ENCODE measurements at regions of chr17 and their contacts with region 1.

Region 1: GRCh38 chr17:979538-980405 is at the start of gene NXN:
- DNase-seq: peak; percentile 61 to 92 (median 83)
- ATAC-seq: peak; percentile 81 to 92 (median 84)
- H3K4me3 ChIP-seq: peak within 1 kb of the TSS; percentile 56 to 63
- H3K4me3 Mint-ChIP-seq: peak within 1 kb of the TSS; percentile 74 to 82 (median 75)
- H3K27ac ChIP-seq: no peak within 1 kb of the TSS
- H3K27ac Mint-ChIP-seq: peak within 1 kb of the TSS; percentile 36 to 88
- H3K4me1 ChIP-seq: peaks cover 0 to 25% of the 10 kb centered on the region in 2 experiments
- H3K4me1 Mint-ChIP-seq: peaks cover 19 to 21% (median 20%) of the 10 kb centered on the region in 3 donors
- H3K27me3 ChIP-seq: peaks cover 7 to 35% of the 10 kb centered on the region in 2 experiments
- H3K27me3 Mint-ChIP-seq: peaks cover 31 to 35% of the 10 kb centered on the region in 2 donors
- total RNA-seq, gene NXN: 0.56 to 1.3 (median 0.96) TPM

Region 2: GRCh38 chr17:693791-694638 is 285.8 kb before region 1 on chr17:
- CTCF ChIA-PET with region 1: no interaction called
- POLR2A ChIA-PET with region 1: no interaction called
- DNase-seq: no peak
- ATAC-seq: no peak
- H3K4me3 ChIP-seq: no peak overlapping the region
- H3K4me3 Mint-ChIP-seq: no peak overlapping the region
- H3K27ac ChIP-seq: no peak overlapping the region
- H3K27ac Mint-ChIP-seq: no peak overlapping the region
- H3K4me1 ChIP-seq: no peaks in the 10 kb centered on the region
- H3K4me1 Mint-ChIP-seq: no peaks in the 10 kb centered on the region
- H3K27me3 ChIP-seq: no peaks in the 10 kb centered on the region
- H3K27me3 Mint-ChIP-seq: no peaks in the 10 kb centered on the region

Region 3: GRCh38 chr17:781805-782731 is 197.7 kb before region 1 on chr17 and contains the starts of genes GLOD4 and MRM3:
- CTCF ChIA-PET with region 1: interaction called in 1 of 2 experiments, 10 read pairs
- POLR2A ChIA-PET with region 1: no interaction called
- DNase-seq: peak; percentile 85 to 97 (median 93)
- ATAC-seq: peak; percentile 94 to 96 (median 96)
- H3K4me3 ChIP-seq: peak within 1 kb of the TSS; percentile 92 to 100
- H3K4me3 Mint-ChIP-seq: peak within 1 kb of the TSS; percentile 95 to 99 (median 96)
- H3K27ac ChIP-seq: peak within 1 kb of the TSS; percentile 84
- H3K27ac Mint-ChIP-seq: peak within 1 kb of the TSS; percentile 94 to 95
- H3K4me1 ChIP-seq: peaks cover 15 to 31% of the 10 kb centered on the region in 2 experiments
- H3K4me1 Mint-ChIP-seq: peaks cover 31 to 37% (median 35%) of the 10 kb centered on the region in 3 donors
- H3K27me3 ChIP-seq: no peaks in the 10 kb centered on the region
- H3K27me3 Mint-ChIP-seq: no peaks in the 10 kb centered on the region
- total RNA-seq, gene GLOD4: 66.9 to 85.1 (median 76.8) TPM
- total RNA-seq, gene MRM3: 23.0 to 34.1 (median 25.6) TPM

Region 4: DNA sequence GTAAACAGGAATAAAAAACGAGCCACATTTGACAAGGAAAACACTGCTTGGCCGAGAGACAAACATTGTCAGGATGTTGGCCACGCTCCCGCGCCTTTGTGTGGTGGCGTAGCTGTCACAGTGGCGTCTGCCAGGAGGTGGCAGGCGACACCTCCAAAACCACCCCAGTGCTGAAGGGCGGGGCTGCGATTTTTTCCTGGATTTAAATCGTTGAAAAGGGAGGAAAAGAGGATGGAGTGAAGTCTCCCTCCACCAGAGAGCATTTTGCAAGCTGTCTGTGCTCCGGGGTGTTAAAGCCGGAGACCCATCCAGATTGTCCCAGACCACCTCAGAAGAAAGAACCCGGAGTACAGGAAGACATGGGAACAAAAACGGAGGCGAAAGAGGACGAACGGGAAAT is 184.9 kb before region 1 on chr17:
- CTCF ChIA-PET with region 1: interaction called in 1 of 2 experiments, 19 read pairs
- POLR2A ChIA-PET with region 1: no interaction called
- DNase-seq: peak in 27 of 35 experiments; percentile 8 to 63 (median 31)
- ATAC-seq: peak; percentile 61 to 83 (median 72)
- H3K4me3 ChIP-seq: no peak overlapping the region
- H3K4me3 Mint-ChIP-seq: no peak overlapping the region
- H3K27ac ChIP-seq: no peak overlapping the region
- H3K27ac Mint-ChIP-seq: no peak overlapping the region
- H3K4me1 ChIP-seq: peaks cover 0 to 7% of the 10 kb centered on the region in 2 experiments
- H3K4me1 Mint-ChIP-seq: peaks cover 6 to 10% (median 6%) of the 10 kb centered on the region in 3 donors
- H3K27me3 ChIP-seq: no peaks in the 10 kb centered on the region
- H3K27me3 Mint-ChIP-seq: no peaks in the 10 kb centered on the region

Region 5: DNA sequence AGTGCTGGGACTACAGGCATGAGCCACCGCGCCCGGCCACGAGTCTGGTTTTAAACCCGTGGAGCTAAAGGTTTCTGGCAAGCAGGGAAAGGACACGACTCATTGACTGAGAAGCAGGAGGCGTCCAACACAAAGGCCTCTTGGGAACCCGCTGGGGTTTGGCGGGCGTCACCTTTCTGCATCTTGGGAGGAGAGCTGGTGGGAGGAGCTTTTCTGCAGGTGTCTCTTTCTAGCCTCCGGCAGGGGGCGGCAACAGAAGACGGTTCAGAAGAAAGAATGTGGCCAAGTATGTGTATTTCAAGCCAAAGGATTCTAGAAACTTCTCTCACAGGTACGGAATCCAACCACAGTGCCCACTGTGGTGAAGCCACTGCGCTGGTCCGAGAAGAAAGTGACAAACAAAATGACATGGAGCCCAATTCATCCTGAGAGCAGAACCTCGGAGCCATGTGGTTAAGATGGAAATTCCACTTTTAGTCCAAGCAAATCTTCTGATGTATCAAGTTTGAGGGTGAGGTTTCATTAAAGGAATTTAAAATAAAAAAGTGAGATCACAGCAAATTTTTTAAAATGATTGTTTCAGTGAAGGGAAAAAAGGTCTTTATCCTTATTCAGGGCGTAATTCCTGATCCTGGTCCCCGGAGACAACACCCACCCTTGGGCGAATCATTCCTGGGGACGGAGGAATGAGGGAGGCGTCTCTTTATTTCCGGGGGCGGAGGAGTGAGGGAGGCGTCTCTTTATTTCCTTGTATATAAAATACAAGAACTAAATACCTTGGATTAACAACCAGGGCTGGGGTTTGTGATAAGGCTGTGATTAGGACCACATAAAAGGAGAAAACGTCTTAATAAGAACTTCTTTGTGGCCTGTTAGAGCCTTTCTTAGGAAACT is 100.0 kb before region 1 on chr17:
- CTCF ChIA-PET with region 1: interaction called in 1 of 2 experiments, 21 read pairs
- POLR2A ChIA-PET with region 1: no interaction called
- DNase-seq: peak; percentile 13 to 81 (median 64)
- ATAC-seq: peak; percentile 37 to 79 (median 59)
- H3K4me3 ChIP-seq: no peak overlapping the region
- H3K4me3 Mint-ChIP-seq: no peak overlapping the region
- H3K27ac ChIP-seq: no peak overlapping the region
- H3K27ac Mint-ChIP-seq: no peak overlapping the region
- H3K4me1 ChIP-seq: peaks cover 0 to 12% of the 10 kb centered on the region in 2 experiments
- H3K4me1 Mint-ChIP-seq: peaks cover 9 to 13% (median 10%) of the 10 kb centered on the region in 3 donors
- H3K27me3 ChIP-seq: peaks cover 0 to 43% of the 10 kb centered on the region in 2 experiments
- H3K27me3 Mint-ChIP-seq: peaks cover 21 to 29% of the 10 kb centered on the region in 2 donors

Region 6: DNA sequence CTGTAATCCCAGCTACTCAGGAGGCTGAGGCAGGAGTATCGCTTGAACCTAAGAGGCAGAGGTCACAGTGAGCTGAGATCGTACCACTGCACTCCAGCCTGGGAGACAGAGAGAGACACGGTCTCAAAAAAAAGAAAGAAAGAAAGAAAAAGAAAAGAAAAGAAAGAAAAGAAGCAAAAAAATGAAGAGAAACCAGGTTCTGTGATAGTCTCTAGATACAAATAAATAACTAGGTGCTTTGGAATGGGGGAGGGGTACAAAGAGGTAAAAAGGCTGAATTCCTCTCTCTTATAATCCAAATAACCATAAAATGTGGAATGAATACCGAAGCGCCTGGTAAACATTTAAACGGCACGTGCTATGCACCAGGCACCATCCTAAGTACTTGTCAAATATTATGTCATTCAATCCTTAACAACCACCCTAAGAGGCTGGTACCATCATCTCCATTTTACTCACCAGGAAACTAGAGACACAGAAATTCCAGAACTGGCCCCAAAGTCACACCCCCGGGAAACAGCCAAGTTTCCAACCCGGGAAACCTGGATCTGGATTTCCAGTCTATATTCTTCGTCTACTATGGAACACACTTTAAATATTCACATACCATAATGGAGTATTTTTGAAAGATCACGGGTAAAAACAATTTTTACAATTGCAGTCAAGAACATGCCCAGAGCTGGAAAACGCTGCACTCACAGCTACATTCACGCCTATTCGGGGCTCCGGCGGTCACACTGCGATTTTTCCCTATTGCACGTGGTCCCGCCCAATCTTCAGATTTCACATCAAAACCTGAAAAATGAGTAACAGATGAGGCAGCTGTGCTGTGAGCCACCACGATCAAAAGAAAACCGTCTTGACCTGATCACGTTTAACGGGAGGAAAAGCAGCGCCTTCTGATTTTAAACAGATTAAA is 10.7 kb before region 1 on chr17:
- CTCF ChIA-PET with region 1: no interaction called
- POLR2A ChIA-PET with region 1: no interaction called
- DNase-seq: no peak
- ATAC-seq: no peak
- H3K4me3 ChIP-seq: no peak overlapping the region
- H3K4me3 Mint-ChIP-seq: no peak overlapping the region
- H3K27ac ChIP-seq: no peak overlapping the region
- H3K27ac Mint-ChIP-seq: no peak overlapping the region
- H3K4me1 ChIP-seq: no peaks in the 10 kb centered on the region
- H3K4me1 Mint-ChIP-seq: peaks cover 3 to 5% (median 5%) of the 10 kb centered on the region in 3 donors
- H3K27me3 ChIP-seq: peaks cover 2 to 61% of the 10 kb centered on the region in 2 experiments
- H3K27me3 Mint-ChIP-seq: peaks cover 44 to 59% of the 10 kb centered on the region in 2 donors

Region 7: DNA sequence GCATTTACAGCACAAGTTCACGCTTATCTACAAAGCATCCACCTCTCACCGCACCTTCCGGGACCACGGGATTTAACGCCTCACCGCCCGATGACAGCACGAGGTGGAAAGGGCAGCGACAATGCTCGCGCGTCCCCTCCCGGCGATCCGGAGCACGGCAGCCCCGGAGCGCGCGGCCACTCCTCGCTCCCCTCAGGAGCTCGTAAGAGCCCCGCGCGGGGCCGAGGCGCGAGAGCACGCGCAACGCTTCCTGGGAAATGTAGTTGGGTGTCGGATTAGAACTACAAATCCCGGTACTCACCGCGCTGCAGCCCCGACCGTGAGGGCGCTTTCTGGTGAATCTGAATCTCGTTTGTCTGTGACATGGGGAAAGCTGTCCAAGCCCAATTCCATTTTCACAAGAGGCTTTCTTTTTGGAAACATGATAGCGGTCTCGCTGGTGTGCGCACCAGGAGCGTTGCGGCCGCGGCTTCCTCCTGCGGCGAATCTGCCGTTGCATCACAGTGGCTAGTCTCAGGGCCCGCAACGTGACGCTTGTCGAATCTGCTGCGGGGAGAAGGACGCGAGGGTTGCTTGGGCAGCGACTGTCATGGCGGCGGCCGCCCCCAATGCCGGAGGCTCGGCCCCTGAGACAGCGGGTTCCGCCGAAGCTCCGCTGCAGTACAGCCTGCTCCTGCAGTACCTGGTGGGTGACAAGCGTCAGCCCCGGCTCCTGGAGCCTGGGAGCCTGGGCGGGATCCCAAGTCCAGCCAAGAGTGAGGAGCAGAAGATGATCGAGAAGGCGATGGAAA is 17.0 kb after region 1 on chr17 and contains the start of gene TIMM22:
- CTCF ChIA-PET with region 1: interaction called in 1 of 2 experiments, 26 read pairs
- POLR2A ChIA-PET with region 1: interaction called in 1 of 2 experiments, 3 read pairs
- DNase-seq: peak; percentile 84 to 96 (median 90)
- ATAC-seq: peak; percentile 94 to 97 (median 96)
- H3K4me3 ChIP-seq: peak within 1 kb of the TSS; percentile 95 to 97
- H3K4me3 Mint-ChIP-seq: peak within 1 kb of the TSS; percentile 96 to 98 (median 98)
- H3K27ac ChIP-seq: peak within 1 kb of the TSS; percentile 71
- H3K27ac Mint-ChIP-seq: peak within 1 kb of the TSS; percentile 97 to 99
- H3K4me1 ChIP-seq: peaks cover 14 to 24% of the 10 kb centered on the region in 2 experiments
- H3K4me1 Mint-ChIP-seq: peaks cover 21 to 26% (median 25%) of the 10 kb centered on the region in 3 donors
- H3K27me3 ChIP-seq: no peaks in the 10 kb centered on the region
- H3K27me3 Mint-ChIP-seq: no peaks in the 10 kb centered on the region
- total RNA-seq, gene TIMM22: 8.9 to 13.2 (median 11.4) TPM